Pancreas (tissue), 10 donors: ENCODE measurements at regions of chr10 and their contacts with region 1.

Region 1: DNA sequence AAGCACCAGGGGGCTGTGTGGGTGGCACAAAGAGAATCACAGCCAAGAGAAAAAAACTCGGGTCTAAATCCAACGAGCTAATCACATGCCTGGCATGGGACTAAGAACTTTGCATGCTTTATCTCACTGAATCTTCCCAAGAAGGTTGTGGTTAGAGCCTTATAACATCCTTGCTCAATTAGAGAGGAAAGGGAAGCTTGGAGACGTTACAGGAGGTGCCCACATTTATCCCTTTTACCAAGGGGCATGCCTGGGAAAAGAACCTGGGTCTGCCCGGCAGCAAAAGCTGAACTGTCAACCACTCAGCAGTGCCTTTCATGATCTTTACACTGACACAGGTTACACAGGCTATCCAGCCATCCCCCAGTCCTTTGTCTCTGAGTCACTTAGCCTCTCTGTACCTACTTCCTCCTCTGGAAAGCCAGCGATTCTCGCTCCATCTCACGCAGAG is 190.1 kb downstream of the PRPF18 start:
- DNase-seq: no peak
- ATAC-seq: peak in 2 of 4 donors; percentile 21 to 50
- H3K4me3 ChIP-seq: no peak overlapping the region
- H3K27ac ChIP-seq: no peak overlapping the region
- H3K4me1 ChIP-seq: no peaks in the 10 kb centered on the region
- H3K27me3 ChIP-seq: no peaks in the 10 kb centered on the region
- CTCF ChIP-seq: no peak

Region 2: GRCh38 chr10:13659897-13660550 is 116.9 kb before region 1 on chr10:
- intact Hi-C with region 1: loop called (anchors 5 to 10 kb)
- DNase-seq: peak in 5 of 6 donors; percentile 36 to 86 (median 65)
- ATAC-seq: peak; percentile 62 to 86 (median 78)
- H3K4me3 ChIP-seq: no peak overlapping the region
- H3K27ac ChIP-seq: no peak overlapping the region
- H3K4me1 ChIP-seq: no peaks in the 10 kb centered on the region
- H3K27me3 ChIP-seq: no peaks in the 10 kb centered on the region
- CTCF ChIP-seq: peak; percentile 71 to 82 (median 81)

Region 3: DNA sequence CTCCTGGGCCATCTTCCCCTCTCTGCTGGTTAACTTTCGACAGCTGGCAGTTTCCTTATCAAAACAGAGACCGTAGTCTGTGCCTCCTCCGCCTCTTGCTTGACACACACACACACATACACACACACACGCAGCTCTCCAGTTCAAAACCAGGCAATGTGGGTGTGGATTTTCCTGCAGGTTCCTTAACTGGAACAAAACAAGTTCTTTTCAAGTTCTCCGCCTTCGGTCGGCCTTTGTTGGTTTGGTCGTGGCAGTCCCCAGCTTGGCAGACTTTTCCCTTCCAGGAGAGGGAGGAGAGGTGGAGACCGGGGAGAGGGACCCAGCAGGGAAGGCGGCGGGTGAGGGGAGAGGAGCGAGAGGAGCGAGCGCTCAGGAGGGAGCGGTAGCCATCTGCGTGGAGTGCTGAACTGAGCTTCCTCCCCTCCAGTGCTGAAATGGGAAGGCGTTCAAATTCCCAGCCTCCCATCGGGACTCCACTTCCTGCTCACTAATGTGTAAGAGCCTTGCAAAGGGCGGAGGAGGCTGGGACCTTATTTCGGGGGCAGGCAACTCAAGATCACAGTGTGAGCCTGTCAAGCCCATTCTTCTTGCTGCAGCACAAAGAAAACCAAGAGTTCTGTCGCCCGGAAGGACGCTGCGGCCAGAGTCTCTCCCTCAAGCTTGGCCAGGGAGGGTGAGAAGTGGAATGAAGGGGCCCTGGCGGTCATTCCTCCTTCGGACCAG is 69.6 kb before region 1 on chr10:
- intact Hi-C with region 1: loop called in 1 of 3 experiments (anchors 10 kb)
- DNase-seq: peak; percentile 71 to 85 (median 78)
- ATAC-seq: peak; percentile 84 to 91 (median 90)
- H3K4me3 ChIP-seq: peak overlapping the region; percentile 47 to 68 (median 62)
- H3K27ac ChIP-seq: peak overlapping the region; percentile 53 to 71 (median 58)
- H3K4me1 ChIP-seq: peaks cover 0 to 15% (median 6%) of the 10 kb centered on the region in 3 donors
- H3K27me3 ChIP-seq: no peaks in the 10 kb centered on the region
- CTCF ChIP-seq: no peak